ENCODE measurements at regions of chr13 and their contacts with region 1.

Region 1: GRCh38 chr13:94093652-94094315 is 385.7 kb downstream of the DCT start:
- DNase-seq: peak; percentile 60
- ATAC-seq: peak; percentile 84
- H3K4me3 ChIP-seq: no peak overlapping the region
- H3K27ac ChIP-seq: no peak overlapping the region
- H3K4me1 ChIP-seq: 0 out of 2 replicates have a peak, but pooled peaks cover 2% of the 10 kb centered on the region
- H3K27me3 ChIP-seq: no peaks in the 10 kb centered on the region
- CTCF ChIP-seq: no peak
- POLR2A ChIP-seq: no peak
- RAD21 ChIP-seq: no peak

Region 2: GRCh38 chr13:94112227-94112626 is 18.4 kb after region 1 on chr13:
- CTCF ChIA-PET with region 1: interaction called, 11 read pairs
- POLR2A ChIA-PET with region 1: no interaction called
- dilution Hi-C with region 1: no loop called
- in situ Hi-C with region 1: no loop called
- intact Hi-C with region 1: no loop called
- DNase-seq: peak; percentile 98
- ATAC-seq: peak; percentile 94
- H3K4me3 ChIP-seq: no peak overlapping the region
- H3K27ac ChIP-seq: no peak overlapping the region
- H3K4me1 ChIP-seq: peaks cover 2% of the 10 kb centered on the region; the same call in 1 of the 2 replicates
- H3K27me3 ChIP-seq: no peaks in the 10 kb centered on the region
- CTCF ChIP-seq: no peak
- POLR2A ChIP-seq: no peak
- RAD21 ChIP-seq: no peak